ENCODE measurements at regions of chr17 and their contacts with region 1.

Region 1: GRCh38 chr17:32783602-32784001 is 93.3 kb downstream of the MYO1D start:
- DNase-seq: peak; percentile 49
- H3K4me3 ChIP-seq: no peak overlapping the region
- H3K27ac ChIP-seq: no peak overlapping the region
- H3K4me1 ChIP-seq: no peaks in the 10 kb centered on the region; a peak in 1 of 4 replicates
- H3K27me3 ChIP-seq: no peaks in the 10 kb centered on the region
- CTCF ChIP-seq: peak; percentile 86
- EP300 ChIP-seq: no peak
- RAD21 ChIP-seq: peak; percentile 93

Region 2: GRCh38 chr17:32588982-32589381 is 194.6 kb before region 1 on chr17:
- CTCF ChIA-PET with region 1: no interaction called
- POLR2A ChIA-PET with region 1: no interaction called
- DNase-seq: peak; percentile 23
- H3K4me3 ChIP-seq: no peak overlapping the region
- H3K27ac ChIP-seq: no peak overlapping the region
- H3K4me1 ChIP-seq: peaks cover 0 to 13% of the 10 kb centered on the region in 2 experiments; a peak in 2 of 4 replicates
- H3K27me3 ChIP-seq: no peaks in the 10 kb centered on the region
- CTCF ChIP-seq: peak; percentile 24; the same call in 1 of the 2 replicates
- EP300 ChIP-seq: no peak
- RAD21 ChIP-seq: no peak

Region 3: GRCh38 chr17:32621617-32622312 is 161.8 kb before region 1 on chr17:
- CTCF ChIA-PET with region 1: no interaction called
- POLR2A ChIA-PET with region 1: no interaction called
- DNase-seq: no peak
- H3K4me3 ChIP-seq: no peak overlapping the region
- H3K27ac ChIP-seq: no peak overlapping the region
- H3K4me1 ChIP-seq: peaks cover 0 to 2% of the 10 kb centered on the region in 2 experiments; a peak in 1 of 4 replicates
- H3K27me3 ChIP-seq: no peaks in the 10 kb centered on the region
- CTCF ChIP-seq: no peak
- EP300 ChIP-seq: no peak
- RAD21 ChIP-seq: no peak

Region 4: GRCh38 chr17:32769839-32770238 is 13.8 kb before region 1 on chr17:
- CTCF ChIA-PET with region 1: interaction called, 43 read pairs
- POLR2A ChIA-PET with region 1: no interaction called
- DNase-seq: no peak
- H3K4me3 ChIP-seq: no peak overlapping the region
- H3K27ac ChIP-seq: no peak overlapping the region
- H3K4me1 ChIP-seq: no peaks in the 10 kb centered on the region; a peak in 1 of 4 replicates
- H3K27me3 ChIP-seq: no peaks in the 10 kb centered on the region
- CTCF ChIP-seq: no peak
- EP300 ChIP-seq: no peak
- RAD21 ChIP-seq: peak; percentile 22; the same call in 1 of the 2 replicates

Region 5: GRCh38 chr17:32803544-32803943 is 19.9 kb after region 1 on chr17:
- CTCF ChIA-PET with region 1: interaction called, 15 read pairs
- POLR2A ChIA-PET with region 1: no interaction called
- DNase-seq: no peak
- H3K4me3 ChIP-seq: no peak overlapping the region
- H3K27ac ChIP-seq: peak overlapping the region in 1 of 2 experiments; percentile 73; a peak in 2 of 4 replicates
- H3K4me1 ChIP-seq: peaks cover 0 to 44% of the 10 kb centered on the region in 2 experiments; a peak in 3 of 4 replicates
- H3K27me3 ChIP-seq: no peaks in the 10 kb centered on the region
- CTCF ChIP-seq: no peak
- EP300 ChIP-seq: no peak
- RAD21 ChIP-seq: no peak

Region 6: DNA sequence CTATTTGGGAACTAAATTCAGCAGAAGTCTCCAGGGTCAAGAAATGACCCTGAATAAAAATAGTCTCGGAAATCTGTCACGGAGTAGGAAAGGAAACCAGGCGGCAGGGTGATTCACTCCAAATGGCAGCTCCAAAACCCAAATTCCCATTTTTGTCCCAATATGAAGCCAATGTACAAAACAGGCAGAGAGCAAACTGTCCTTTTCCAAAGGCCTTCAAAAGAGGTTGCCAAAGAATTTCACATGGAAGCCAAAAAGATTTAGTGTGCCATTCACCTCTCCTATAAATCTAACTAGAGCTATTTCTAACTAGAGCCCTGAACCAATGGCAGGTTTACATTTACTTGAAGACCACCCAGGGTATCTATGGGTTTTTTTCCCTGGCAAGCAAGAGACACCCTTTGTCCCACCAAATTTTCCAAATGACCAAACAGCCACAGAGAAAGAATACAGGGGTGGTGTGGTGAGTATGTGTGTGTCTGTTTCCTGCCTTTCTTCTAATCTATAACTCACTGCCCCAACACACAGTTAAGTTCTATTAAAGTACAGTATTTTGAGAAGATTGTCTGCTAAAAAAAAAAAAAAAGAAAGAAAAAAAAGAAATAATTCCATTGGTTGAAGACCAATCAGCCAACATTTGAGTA is 86.5 kb after region 1 on chr17:
- CTCF ChIA-PET with region 1: interaction called, 162 read pairs
- POLR2A ChIA-PET with region 1: no interaction called
- DNase-seq: no peak
- H3K4me3 ChIP-seq: no peak overlapping the region
- H3K27ac ChIP-seq: peak overlapping the region in 1 of 2 experiments; percentile 27; a peak in 1 of 4 replicates
- H3K4me1 ChIP-seq: no peaks in the 10 kb centered on the region
- H3K27me3 ChIP-seq: no peaks in the 10 kb centered on the region
- CTCF ChIP-seq: no peak
- EP300 ChIP-seq: no peak
- RAD21 ChIP-seq: no peak

Region 7: DNA sequence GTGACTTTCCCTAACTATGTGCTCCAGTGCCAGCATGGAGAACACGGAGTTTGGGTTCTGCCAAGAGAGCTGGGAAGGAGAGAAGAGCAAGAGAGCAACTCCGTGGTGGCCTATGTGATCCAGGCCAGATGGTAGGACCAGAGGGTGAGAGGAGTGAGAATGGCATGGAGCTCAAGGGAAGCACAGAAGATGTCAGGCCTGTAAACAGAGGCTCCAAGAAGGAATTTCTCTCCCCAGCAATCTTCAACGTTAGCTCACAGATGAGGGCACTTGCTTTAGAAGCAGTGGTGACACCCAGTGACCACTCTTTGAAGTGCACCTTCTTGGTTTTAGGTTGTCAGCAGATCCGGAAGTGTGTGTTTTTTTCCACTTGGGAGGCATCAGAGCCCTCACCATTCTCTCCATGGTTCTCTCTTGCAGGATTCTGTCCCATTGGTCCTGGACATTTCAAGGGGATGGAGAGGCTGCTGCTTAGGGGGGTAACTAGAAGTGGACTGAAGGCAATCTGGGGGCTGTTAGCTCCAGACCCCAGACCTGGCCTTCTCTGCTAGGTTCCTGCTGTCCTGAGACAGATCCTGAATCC is 126.3 kb after region 1 on chr17:
- CTCF ChIA-PET with region 1: interaction called, 80 read pairs
- POLR2A ChIA-PET with region 1: no interaction called
- DNase-seq: peak; percentile 71
- H3K4me3 ChIP-seq: no peak overlapping the region; a peak in 1 of 4 replicates
- H3K27ac ChIP-seq: no peak overlapping the region
- H3K4me1 ChIP-seq: no peaks in the 10 kb centered on the region; a peak in 1 of 4 replicates
- H3K27me3 ChIP-seq: no peaks in the 10 kb centered on the region
- CTCF ChIP-seq: peak; percentile 78
- EP300 ChIP-seq: no peak
- RAD21 ChIP-seq: peak; percentile 73

Region 8: GRCh38 chr17:32936894-32937500 is 153.4 kb after region 1 on chr17:
- CTCF ChIA-PET with region 1: interaction called, 20 read pairs
- POLR2A ChIA-PET with region 1: no interaction called
- DNase-seq: peak; percentile 80
- H3K4me3 ChIP-seq: peak overlapping the region in 1 of 2 experiments; percentile 40; a peak in 1 of 4 replicates
- H3K27ac ChIP-seq: no peak overlapping the region; a peak in 1 of 4 replicates
- H3K4me1 ChIP-seq: no peaks in the 10 kb centered on the region; a peak in 1 of 4 replicates
- H3K27me3 ChIP-seq: no peaks in the 10 kb centered on the region
- CTCF ChIP-seq: peak; percentile 74
- EP300 ChIP-seq: no peak
- RAD21 ChIP-seq: peak; percentile 56

Region 9: GRCh38 chr17:32954477-32954876 is 170.9 kb after region 1 on chr17:
- CTCF ChIA-PET with region 1: no interaction called
- POLR2A ChIA-PET with region 1: no interaction called
- DNase-seq: no peak
- H3K4me3 ChIP-seq: no peak overlapping the region
- H3K27ac ChIP-seq: no peak overlapping the region
- H3K4me1 ChIP-seq: no peaks in the 10 kb centered on the region
- H3K27me3 ChIP-seq: no peaks in the 10 kb centered on the region; the same call in 1 of the 2 replicates
- CTCF ChIP-seq: no peak
- EP300 ChIP-seq: no peak
- RAD21 ChIP-seq: no peak

Region 10: GRCh38 chr17:32997753-32998632 is 214.4 kb after region 1 on chr17:
- CTCF ChIA-PET with region 1: interaction called, 11 read pairs
- POLR2A ChIA-PET with region 1: no interaction called
- DNase-seq: peak; percentile 82
- H3K4me3 ChIP-seq: peak overlapping the region; percentile 17 to 47; a peak in 3 of 4 replicates
- H3K27ac ChIP-seq: no peak overlapping the region
- H3K4me1 ChIP-seq: peaks cover 0 to 6% of the 10 kb centered on the region in 2 experiments; a peak in 1 of 4 replicates
- H3K27me3 ChIP-seq: peaks cover 12% of the 10 kb centered on the region
- CTCF ChIP-seq: peak; percentile 87
- EP300 ChIP-seq: no peak
- RAD21 ChIP-seq: peak; percentile 71

Measured in SK-N-SH (cell line).